Left colon (tissue), 2 donors: ENCODE measurements at regions of chr9 and their contacts with region 1.

Region 1: DNA sequence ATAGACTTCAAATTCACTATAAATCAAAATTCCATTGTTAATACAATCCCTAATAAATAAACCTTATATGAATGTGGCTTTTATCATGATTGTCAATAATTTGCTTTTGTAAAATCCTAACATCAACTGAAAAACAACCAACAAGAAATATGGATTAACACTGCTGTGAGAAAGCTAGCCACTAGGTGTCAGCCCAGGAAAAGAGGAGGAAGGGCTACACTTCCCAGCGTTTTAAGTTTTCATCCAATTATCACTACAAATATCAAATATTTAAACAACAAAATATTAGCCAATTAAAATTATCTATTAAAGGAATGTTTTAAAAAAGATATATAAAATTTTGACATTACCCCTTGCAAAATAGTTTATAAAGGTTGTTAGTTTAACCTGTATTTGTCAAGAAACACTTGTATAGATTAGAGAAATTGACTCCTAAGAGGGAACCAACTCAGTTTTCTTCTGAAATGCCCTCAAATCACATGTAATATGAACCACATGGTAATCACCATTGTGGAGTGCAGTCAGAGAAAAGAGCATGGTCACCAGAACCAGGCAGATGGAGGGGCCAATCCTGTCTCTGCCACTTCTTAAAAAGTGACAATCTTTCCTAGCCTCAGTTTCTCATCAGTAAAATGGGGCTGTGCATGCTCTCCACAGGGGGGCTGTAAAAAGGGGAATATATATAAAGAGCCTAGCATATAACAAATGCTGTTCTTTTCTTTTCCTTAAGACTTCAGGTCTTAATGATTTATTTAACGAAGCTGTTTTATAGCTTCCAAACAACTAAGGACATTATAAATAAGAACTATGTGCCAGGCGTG is 188.2 kb downstream of the CRB2 start:
- DNase-seq: peak in 1 of 2 donors; percentile 23
- ATAC-seq: peak; percentile 76

Region 2: DNA sequence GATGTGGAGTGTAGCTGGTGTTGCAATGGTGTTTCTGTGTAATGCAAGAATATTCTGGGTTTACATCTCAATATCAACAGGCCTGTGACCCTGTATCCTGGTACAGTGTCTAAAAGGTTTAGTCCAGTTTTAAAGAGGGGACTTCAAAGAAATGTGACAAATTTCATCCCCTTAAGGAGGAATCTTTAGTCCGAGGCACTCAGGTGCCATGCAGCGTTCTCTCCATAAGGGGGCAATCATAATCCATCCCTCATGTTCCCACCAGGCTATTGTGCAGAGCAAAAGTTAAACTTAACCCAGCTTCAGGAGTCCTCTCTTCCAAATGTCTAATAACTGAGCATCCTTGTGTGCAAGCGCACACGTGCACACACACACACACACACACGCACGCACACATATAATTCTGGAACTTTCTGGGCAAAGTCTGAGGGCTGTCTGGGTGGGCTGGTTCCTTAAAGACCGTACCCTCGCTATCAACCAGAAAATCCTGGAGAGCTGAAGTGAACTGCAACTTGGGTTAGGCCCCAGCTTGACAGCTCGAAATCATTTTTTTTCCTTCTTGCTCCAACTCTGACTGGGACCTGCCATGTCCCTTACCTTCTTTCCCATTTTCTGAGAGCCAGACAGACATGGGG is 142.2 kb before region 1 on chr9:
- intact Hi-C with region 1: no loop called
- DNase-seq: peak in 1 of 2 donors; percentile 31
- ATAC-seq: peak; percentile 88

Region 3: DNA sequence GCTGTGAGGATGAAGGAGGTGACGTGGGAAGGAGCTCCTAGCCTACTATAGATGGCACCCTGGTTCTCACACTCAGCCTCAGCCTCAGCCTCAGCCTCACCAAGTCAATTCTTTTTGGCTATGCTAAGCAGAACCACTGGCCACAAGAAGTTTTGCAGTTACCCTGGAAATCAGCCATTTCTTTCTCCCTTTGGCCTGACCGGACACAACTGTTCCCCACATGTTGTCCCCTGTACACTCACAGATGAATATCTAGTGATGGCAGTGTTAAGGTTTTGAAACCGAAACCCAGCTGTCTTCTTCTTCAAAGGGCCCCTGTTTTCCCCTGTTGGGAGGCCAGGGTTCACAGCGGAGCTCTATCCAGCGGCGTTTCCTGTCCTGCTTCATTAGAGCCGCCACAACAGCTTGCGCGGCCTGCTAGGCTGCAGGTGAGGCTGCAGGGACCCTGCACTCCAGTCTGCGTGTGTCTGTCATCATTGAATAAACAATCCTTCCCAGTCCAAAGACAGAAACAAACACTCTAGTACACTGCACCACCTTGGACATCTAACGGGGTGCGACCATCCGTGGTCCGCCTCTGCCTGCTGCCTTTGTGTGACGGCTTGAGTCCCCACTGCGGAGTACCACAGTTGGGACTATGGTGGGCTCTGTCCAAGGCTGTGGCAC is 135.2 kb after region 1 on chr9:
- intact Hi-C with region 1: no loop called
- DNase-seq: peak; percentile 39 to 41
- ATAC-seq: peak; percentile 38

Region 4: DNA sequence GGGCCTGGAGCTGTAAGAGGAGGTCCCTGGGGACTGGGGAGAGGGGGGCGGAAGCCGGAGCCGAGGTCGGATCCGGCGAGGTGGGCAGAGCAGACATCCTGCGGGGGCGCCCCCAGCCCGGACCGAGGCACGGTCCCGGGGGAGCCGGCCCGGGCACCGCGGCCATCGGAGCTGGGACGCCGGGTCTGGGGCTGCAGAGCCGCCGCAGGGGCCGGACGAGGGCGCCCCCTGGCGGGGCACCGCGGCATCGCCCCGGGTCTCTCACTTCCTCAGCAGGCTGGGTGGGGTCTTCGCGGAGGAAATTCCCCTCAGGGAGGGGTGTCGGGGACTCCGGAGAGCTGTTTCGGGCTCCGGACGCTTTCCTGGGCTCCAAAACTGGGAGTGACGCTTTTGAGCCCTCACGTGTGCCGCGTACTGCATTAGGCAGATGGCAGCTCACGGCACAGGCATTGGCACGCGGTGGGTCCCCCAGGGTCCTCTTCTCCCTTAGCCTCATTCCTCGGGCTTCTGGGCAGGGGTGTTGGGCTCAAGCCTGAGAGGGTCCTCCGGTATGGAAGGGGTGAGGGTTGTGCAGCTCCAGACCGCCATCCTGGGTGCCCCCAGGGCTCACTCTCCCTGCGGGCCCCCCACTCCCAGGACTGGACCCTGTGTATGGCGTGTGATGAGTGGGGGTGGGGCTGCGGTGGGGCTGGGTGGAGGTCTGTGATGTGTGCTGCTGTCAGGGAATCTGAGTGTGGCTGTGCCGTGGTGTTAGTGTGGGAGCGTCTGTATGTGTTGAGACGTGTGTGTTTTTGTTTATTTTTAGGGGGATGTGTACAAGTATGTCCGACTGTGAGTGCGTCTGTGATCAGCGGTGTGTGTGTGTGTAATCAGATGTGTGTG is 497.0 kb after region 1 on chr9:
- intact Hi-C with region 1: loop called in 1 of 2 experiments (anchors 5 kb)
- DNase-seq: peak in 1 of 2 donors; percentile 62
- ATAC-seq: peak; percentile 77